ENCODE measurements at regions of chr6 and their contacts with region 1.

Region 1: DNA sequence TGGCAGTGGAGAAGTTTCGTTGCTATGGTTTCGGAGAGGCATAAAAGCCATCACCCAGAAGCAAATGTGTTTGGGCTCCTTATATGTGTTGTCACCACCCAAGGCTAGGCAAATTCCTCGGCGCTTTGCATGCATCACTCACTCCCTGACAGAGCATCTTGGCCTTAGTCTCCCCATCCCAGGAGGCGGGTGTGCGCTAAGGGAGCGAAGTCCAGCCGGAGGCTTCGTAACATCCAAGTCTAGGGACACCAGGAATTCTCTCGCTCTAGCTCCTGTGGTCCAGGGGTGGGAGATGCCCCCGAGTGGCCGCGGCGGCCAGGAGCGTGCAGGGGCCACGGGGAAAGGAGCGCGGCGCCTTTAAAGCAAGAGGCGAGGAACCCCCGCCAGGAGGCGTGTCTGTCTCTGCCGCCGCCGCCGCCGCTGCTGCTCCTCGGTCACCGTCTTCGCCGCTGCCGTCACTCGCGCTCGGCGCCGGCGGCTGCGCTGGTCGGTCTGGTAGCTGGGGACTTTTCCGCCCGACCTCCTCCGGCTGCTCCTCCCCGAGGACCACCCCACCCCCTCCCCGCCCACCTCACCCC is at the start of gene GRIK2:
- DNase-seq: peak; percentile 45
- ATAC-seq: peak; percentile 58
- H3K4me3 ChIP-seq: peak within 1 kb of the TSS; percentile 71
- H3K27ac ChIP-seq: no peak within 1 kb of the TSS
- H3K4me1 ChIP-seq: peaks cover 21% of the 10 kb centered on the region; the same call in 1 of the 2 replicates
- H3K27me3 ChIP-seq: peaks cover 14% of the 10 kb centered on the region
- CTCF ChIP-seq: peak; percentile 24; the same call in 1 of the 2 replicates
- total RNA-seq, gene GRIK2: 0.55 and 2.8 TPM in 2 replicates

Region 2: GRCh38 chr6:100678027-100678426 is 715.3 kb before region 1 on chr6:
- CTCF ChIA-PET with region 1: no interaction called
- POLR2A ChIA-PET with region 1: no interaction called
- intact Hi-C with region 1: loop called (anchors 5 kb)
- DNase-seq: no peak
- ATAC-seq: no peak
- H3K4me3 ChIP-seq: no peak overlapping the region
- H3K27ac ChIP-seq: no peak overlapping the region
- H3K4me1 ChIP-seq: no peaks in the 10 kb centered on the region
- H3K27me3 ChIP-seq: no peaks in the 10 kb centered on the region
- CTCF ChIP-seq: peak; percentile 40; the same call in 1 of the 2 replicates

Region 3: GRCh38 chr6:100780678-100781077 is 612.7 kb before region 1 on chr6:
- CTCF ChIA-PET with region 1: no interaction called
- POLR2A ChIA-PET with region 1: no interaction called
- intact Hi-C with region 1: loop called (anchors 5 kb)
- DNase-seq: peak; percentile 66
- ATAC-seq: peak; percentile 96
- H3K4me3 ChIP-seq: no peak overlapping the region
- H3K27ac ChIP-seq: peak overlapping the region; percentile 88
- H3K4me1 ChIP-seq: peaks cover 13% of the 10 kb centered on the region
- H3K27me3 ChIP-seq: no peaks in the 10 kb centered on the region
- CTCF ChIP-seq: no peak

Region 4: GRCh38 chr6:101114703-101115102 is 278.6 kb before region 1 on chr6:
- CTCF ChIA-PET with region 1: no interaction called
- POLR2A ChIA-PET with region 1: no interaction called
- intact Hi-C with region 1: loop called (anchors 2 kb)
- DNase-seq: peak; percentile 58
- ATAC-seq: peak; percentile 51
- H3K4me3 ChIP-seq: no peak overlapping the region
- H3K27ac ChIP-seq: no peak overlapping the region
- H3K4me1 ChIP-seq: peaks cover 53% of the 10 kb centered on the region
- H3K27me3 ChIP-seq: no peaks in the 10 kb centered on the region
- CTCF ChIP-seq: peak; percentile 66

Region 5: GRCh38 chr6:101403216-101403945 is 10.0 kb after region 1 on chr6:
- CTCF ChIA-PET with region 1: no interaction called
- POLR2A ChIA-PET with region 1: no interaction called
- intact Hi-C with region 1: no loop called
- DNase-seq: no peak
- ATAC-seq: no peak
- H3K4me3 ChIP-seq: no peak overlapping the region
- H3K27ac ChIP-seq: no peak overlapping the region
- H3K4me1 ChIP-seq: no peaks in the 10 kb centered on the region
- H3K27me3 ChIP-seq: no peaks in the 10 kb centered on the region
- CTCF ChIP-seq: no peak

Region 6: DNA sequence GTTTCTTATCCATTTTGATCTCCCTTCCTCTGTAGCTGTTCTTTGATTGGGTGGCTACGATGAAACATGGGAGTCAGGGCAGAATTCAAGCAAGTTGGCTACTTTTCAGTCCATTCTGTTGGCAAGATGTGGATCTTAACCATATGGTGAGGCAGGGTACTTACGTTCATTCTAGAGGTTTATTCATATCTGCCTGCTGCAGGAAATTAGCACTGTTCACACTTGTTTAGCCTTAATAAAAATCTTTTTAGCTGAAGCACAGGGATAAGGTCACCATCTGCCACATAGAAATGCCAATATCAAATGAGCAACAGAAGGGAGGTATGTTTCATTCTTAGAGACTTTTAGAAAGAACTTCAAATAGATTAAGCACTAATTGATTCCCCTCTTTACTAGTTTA is 84.1 kb after region 1 on chr6:
- CTCF ChIA-PET with region 1: no interaction called
- POLR2A ChIA-PET with region 1: no interaction called
- intact Hi-C with region 1: no loop called
- DNase-seq: no peak
- ATAC-seq: no peak
- H3K4me3 ChIP-seq: no peak overlapping the region
- H3K27ac ChIP-seq: no peak overlapping the region
- H3K4me1 ChIP-seq: no peaks in the 10 kb centered on the region
- H3K27me3 ChIP-seq: no peaks in the 10 kb centered on the region
- CTCF ChIP-seq: no peak

Region 7: DNA sequence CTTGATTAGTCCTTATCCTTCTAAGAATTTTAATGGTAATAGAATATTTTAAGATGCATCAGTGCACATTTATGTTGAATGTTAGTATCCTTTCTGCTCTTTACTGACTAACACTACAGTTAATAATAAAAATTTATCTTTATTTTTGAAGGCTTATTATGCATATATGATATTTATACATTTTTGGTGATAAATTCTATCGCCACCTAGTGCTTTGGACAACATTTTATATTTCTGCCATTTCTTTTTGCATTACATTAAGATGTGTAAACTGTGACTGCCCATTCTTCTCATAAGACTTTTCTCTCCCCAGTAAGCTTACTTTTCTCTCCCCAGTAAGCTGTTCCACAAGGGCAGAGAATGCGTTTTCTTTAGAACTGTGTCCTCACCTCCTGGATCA is 252.4 kb after region 1 on chr6:
- CTCF ChIA-PET with region 1: no interaction called
- POLR2A ChIA-PET with region 1: no interaction called
- intact Hi-C with region 1: loop called (anchors 5 kb)
- DNase-seq: no peak
- ATAC-seq: no peak
- H3K4me3 ChIP-seq: no peak overlapping the region
- H3K27ac ChIP-seq: no peak overlapping the region
- H3K4me1 ChIP-seq: no peaks in the 10 kb centered on the region
- H3K27me3 ChIP-seq: no peaks in the 10 kb centered on the region
- CTCF ChIP-seq: peak; percentile 30; the same call in 1 of the 2 replicates

Region 8: DNA sequence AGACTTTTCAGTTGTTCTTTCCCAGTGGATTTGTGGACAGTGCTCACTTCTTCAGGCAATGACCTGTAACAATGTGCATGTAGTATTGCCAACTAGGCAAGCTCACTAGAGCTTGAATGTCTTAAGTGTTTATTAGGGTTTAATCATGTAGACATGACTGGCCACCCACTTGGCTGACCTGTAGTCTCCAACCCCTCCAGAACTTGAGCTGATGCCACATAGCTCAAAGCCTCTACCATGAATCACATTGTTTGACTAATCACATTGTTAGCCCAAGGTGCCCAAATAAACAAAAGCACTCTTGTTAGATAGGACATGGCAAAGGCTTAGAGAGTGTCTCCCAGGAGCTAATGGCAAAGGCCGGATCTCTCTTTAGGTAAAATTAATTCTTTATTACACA is 272.9 kb after region 1 on chr6:
- CTCF ChIA-PET with region 1: no interaction called
- POLR2A ChIA-PET with region 1: no interaction called
- intact Hi-C with region 1: loop called (anchors 2 kb)
- DNase-seq: peak; percentile 90
- ATAC-seq: peak; percentile 94
- H3K4me3 ChIP-seq: 0 out of 2 replicates have a peak overlapping the region, but pooled peaks have one; percentile 23
- H3K27ac ChIP-seq: peak overlapping the region; percentile 56
- H3K4me1 ChIP-seq: peaks cover 19% of the 10 kb centered on the region
- H3K27me3 ChIP-seq: no peaks in the 10 kb centered on the region
- CTCF ChIP-seq: no peak

Region 9: GRCh38 chr6:103122766-103123601 is 1729.6 kb after region 1 on chr6:
- CTCF ChIA-PET with region 1: no interaction called
- POLR2A ChIA-PET with region 1: no interaction called
- intact Hi-C with region 1: loop called (anchors 10 kb)
- DNase-seq: peak; percentile 62
- ATAC-seq: peak; percentile 80
- H3K4me3 ChIP-seq: no peak overlapping the region
- H3K27ac ChIP-seq: no peak overlapping the region
- H3K4me1 ChIP-seq: no peaks in the 10 kb centered on the region
- H3K27me3 ChIP-seq: no peaks in the 10 kb centered on the region
- CTCF ChIP-seq: peak; percentile 76